SK-N-SH (cell line): ENCODE measurements at regions of chr12 and their contacts with region 1.

Region 1: GRCh38 chr12:85866986-85867776 is 6.9 kb upstream of the NTS start:
- DNase-seq: peak; percentile 51
- H3K4me3 ChIP-seq: peak overlapping the region in 1 of 2 experiments; percentile 8; a peak in 1 of 4 replicates
- H3K27ac ChIP-seq: no peak overlapping the region
- H3K4me1 ChIP-seq: no peaks in the 10 kb centered on the region
- H3K27me3 ChIP-seq: no peaks in the 10 kb centered on the region
- CTCF ChIP-seq: peak; percentile 83
- EP300 ChIP-seq: no peak
- RAD21 ChIP-seq: peak; percentile 85

Region 2: GRCh38 chr12:85476756-85477155 is 390.4 kb before region 1 on chr12:
- CTCF ChIA-PET with region 1: interaction called, 19 read pairs
- POLR2A ChIA-PET with region 1: no interaction called
- DNase-seq: no peak
- H3K4me3 ChIP-seq: no peak overlapping the region
- H3K27ac ChIP-seq: no peak overlapping the region
- H3K4me1 ChIP-seq: 0 out of 4 replicates have a peak, but pooled peaks cover 0 to 4% of the 10 kb centered on the region in 2 experiments
- H3K27me3 ChIP-seq: no peaks in the 10 kb centered on the region
- CTCF ChIP-seq: no peak
- EP300 ChIP-seq: no peak
- RAD21 ChIP-seq: no peak

Region 3: DNA sequence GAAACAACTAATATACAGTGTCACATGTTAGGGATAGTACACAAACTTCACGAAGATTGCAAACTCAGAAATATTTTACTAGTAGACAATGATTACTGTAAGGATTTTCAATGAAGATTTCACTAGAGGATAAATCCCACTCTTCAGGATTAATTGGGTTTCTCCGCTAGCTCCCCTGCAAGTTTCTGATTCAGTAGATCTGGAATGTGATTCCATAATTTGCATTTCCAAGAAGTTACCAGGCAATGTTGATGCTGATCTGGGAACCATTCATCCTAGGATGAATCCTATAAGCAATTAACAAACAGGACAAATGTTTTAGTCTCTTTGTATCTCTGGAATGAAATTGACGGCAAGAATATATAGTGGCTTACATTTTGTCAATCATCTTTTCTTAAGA is 314.7 kb before region 1 on chr12:
- CTCF ChIA-PET with region 1: interaction called, 16 read pairs
- POLR2A ChIA-PET with region 1: no interaction called
- DNase-seq: no peak
- H3K4me3 ChIP-seq: no peak overlapping the region
- H3K27ac ChIP-seq: no peak overlapping the region
- H3K4me1 ChIP-seq: no peaks in the 10 kb centered on the region
- H3K27me3 ChIP-seq: no peaks in the 10 kb centered on the region
- CTCF ChIP-seq: no peak
- EP300 ChIP-seq: no peak
- RAD21 ChIP-seq: no peak

Region 4: DNA sequence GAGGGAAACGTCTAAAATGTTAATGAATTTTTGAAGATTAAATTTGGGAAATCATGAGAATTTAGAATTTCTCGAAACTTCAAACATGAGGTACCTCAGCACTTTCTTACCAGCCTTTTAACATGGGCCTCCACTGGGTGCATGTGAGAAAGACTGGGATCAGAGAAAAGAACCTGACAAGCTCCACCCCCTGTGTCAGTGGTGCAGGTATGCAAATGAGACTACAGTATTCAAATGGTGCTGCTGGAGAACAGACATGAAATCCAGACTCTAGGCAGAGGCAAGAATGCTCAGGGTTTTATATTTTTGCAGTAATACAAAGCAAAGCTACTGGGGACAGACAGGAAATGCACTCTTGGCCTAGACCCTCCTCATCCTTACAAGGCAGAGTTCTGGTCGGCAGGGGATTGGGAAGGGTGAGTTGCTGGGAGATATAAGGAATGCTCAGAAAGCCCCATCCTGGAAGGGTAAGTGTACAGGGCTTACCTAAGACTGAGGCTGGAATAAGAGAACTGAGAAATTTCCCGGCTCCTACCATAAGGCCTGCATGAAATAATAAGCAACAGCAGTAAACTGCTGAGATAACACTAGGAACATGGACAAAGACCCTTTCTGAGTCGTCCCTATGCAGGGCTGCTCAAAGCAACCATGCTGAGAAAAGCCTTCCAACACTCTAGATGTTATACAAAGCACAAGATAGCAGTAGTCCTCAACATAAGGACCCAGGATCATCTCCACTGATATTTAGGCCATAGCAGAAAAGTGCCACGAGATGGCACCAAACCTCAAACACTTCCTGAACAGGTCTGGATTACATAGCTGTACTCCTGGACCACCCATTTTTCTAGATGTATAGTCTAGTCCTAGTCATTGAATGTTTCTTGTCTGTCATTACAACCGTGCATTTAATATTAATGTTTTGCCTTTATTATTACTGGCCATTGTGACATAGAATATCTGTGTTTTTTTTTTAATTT is 291.8 kb before region 1 on chr12:
- CTCF ChIA-PET with region 1: interaction called, 80 read pairs
- POLR2A ChIA-PET with region 1: no interaction called
- DNase-seq: peak; percentile 46
- H3K4me3 ChIP-seq: no peak overlapping the region; a peak in 1 of 4 replicates
- H3K27ac ChIP-seq: no peak overlapping the region
- H3K4me1 ChIP-seq: no peaks in the 10 kb centered on the region; a peak in 1 of 4 replicates
- H3K27me3 ChIP-seq: no peaks in the 10 kb centered on the region
- CTCF ChIP-seq: peak; percentile 82
- EP300 ChIP-seq: no peak
- RAD21 ChIP-seq: peak; percentile 79

Region 5: GRCh38 chr12:85821759-85822158 is 45.4 kb before region 1 on chr12:
- CTCF ChIA-PET with region 1: interaction called, 11 read pairs
- POLR2A ChIA-PET with region 1: no interaction called
- DNase-seq: no peak
- H3K4me3 ChIP-seq: no peak overlapping the region
- H3K27ac ChIP-seq: 0 out of 4 replicates have a peak overlapping the region, but pooled peaks of 1 of the 2 experiments have one; percentile 20
- H3K4me1 ChIP-seq: no peaks in the 10 kb centered on the region
- H3K27me3 ChIP-seq: no peaks in the 10 kb centered on the region
- CTCF ChIP-seq: no peak
- EP300 ChIP-seq: no peak
- RAD21 ChIP-seq: no peak

Region 6: GRCh38 chr12:85843606-85844285 is 23.4 kb before region 1 on chr12:
- CTCF ChIA-PET with region 1: interaction called, 15 read pairs
- POLR2A ChIA-PET with region 1: no interaction called
- DNase-seq: no peak
- H3K4me3 ChIP-seq: no peak overlapping the region
- H3K27ac ChIP-seq: no peak overlapping the region
- H3K4me1 ChIP-seq: no peaks in the 10 kb centered on the region
- H3K27me3 ChIP-seq: no peaks in the 10 kb centered on the region
- CTCF ChIP-seq: no peak
- EP300 ChIP-seq: no peak
- RAD21 ChIP-seq: no peak